Activated CD4-positive, alpha-beta memory T cell treated with anti-CD3 and anti-CD28 coated beads for 36 hours (primary cell): ENCODE measurements at regions of chr5 and their contacts with region 1.

Region 1: GRCh38 chr5:39283231-39283818 is 64.0 kb upstream of the FYB1 start:
- DNase-seq: peak; percentile 60
- H3K4me3 Mint-ChIP-seq: peak overlapping the region; percentile 4
- H3K27ac Mint-ChIP-seq: peak overlapping the region; percentile 68
- H3K4me1 Mint-ChIP-seq: peaks cover 31% of the 10 kb centered on the region
- H3K27me3 Mint-ChIP-seq: peaks cover 3% of the 10 kb centered on the region

Region 2: GRCh38 chr5:38871790-38872551 is 411.4 kb before region 1 on chr5:
- CTCF ChIA-PET with region 1: no interaction called
- POLR2A ChIA-PET with region 1: no interaction called
- intact Hi-C with region 1: no loop called
- DNase-seq: no peak
- H3K4me3 Mint-ChIP-seq: no peak overlapping the region
- H3K27ac Mint-ChIP-seq: no peak overlapping the region
- H3K4me1 Mint-ChIP-seq: no peaks in the 10 kb centered on the region
- H3K27me3 Mint-ChIP-seq: peaks cover 23% of the 10 kb centered on the region

Region 3: DNA sequence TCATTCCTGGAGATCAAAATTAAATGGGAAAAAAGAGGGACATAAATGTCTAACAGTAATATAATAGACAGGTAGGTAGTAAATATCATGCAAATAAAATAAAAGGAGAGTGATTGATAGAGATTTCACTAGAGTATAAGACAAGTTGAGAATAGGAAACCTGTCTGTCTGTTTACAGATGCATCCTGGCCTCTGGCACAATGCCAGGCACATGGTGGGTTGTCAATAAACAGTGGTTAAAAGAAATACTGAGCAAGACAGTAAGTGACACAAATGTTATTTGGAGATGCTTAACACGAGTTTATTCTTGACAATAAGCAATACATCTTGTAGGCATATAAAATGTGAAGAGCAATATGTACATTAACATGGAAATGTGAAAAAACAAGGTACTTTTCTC is 242.4 kb before region 1 on chr5:
- CTCF ChIA-PET with region 1: no interaction called
- POLR2A ChIA-PET with region 1: no interaction called
- intact Hi-C with region 1: no loop called
- DNase-seq: no peak
- H3K4me3 Mint-ChIP-seq: no peak overlapping the region
- H3K27ac Mint-ChIP-seq: no peak overlapping the region
- H3K4me1 Mint-ChIP-seq: peaks cover 26% of the 10 kb centered on the region
- H3K27me3 Mint-ChIP-seq: no peaks in the 10 kb centered on the region

Region 4: GRCh38 chr5:39074016-39074886 is 209.1 kb before region 1 on chr5 and contains the start of gene RICTOR:
- CTCF ChIA-PET with region 1: interaction called, 3 read pairs
- POLR2A ChIA-PET with region 1: no interaction called
- intact Hi-C with region 1: loop called (anchors 2 kb)
- DNase-seq: peak; percentile 95
- H3K4me3 Mint-ChIP-seq: peak within 1 kb of the TSS; percentile 97
- H3K27ac Mint-ChIP-seq: peak within 1 kb of the TSS; percentile 96
- H3K4me1 Mint-ChIP-seq: peaks cover 28% of the 10 kb centered on the region
- H3K27me3 Mint-ChIP-seq: peaks cover 18% of the 10 kb centered on the region
- total RNA-seq, gene RICTOR: 27.7 to 27.8 TPM

Region 5: DNA sequence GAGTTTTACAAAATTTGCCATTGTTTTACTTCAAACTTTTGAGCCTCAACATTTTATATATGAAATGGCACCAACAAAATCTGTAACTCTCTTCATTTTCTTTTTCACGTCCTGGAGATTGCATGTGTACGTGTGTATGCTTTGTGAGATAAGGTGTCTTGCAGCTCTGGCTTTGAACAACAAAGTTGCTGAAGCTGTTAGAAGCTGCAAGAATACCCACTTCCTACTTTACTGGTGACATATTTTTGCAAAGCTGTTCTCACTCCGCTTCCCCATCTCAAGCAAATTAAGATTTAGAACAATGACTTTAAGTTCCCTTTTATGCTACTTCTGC is 105.7 kb before region 1 on chr5:
- CTCF ChIA-PET with region 1: interaction called, 4 read pairs
- POLR2A ChIA-PET with region 1: no interaction called
- intact Hi-C with region 1: loop called (anchors 1 kb)
- DNase-seq: no peak
- H3K4me3 Mint-ChIP-seq: peak overlapping the region; percentile 63
- H3K27ac Mint-ChIP-seq: peak overlapping the region; percentile 88
- H3K4me1 Mint-ChIP-seq: peaks cover 97% of the 10 kb centered on the region
- H3K27me3 Mint-ChIP-seq: no peaks in the 10 kb centered on the region

Region 6: DNA sequence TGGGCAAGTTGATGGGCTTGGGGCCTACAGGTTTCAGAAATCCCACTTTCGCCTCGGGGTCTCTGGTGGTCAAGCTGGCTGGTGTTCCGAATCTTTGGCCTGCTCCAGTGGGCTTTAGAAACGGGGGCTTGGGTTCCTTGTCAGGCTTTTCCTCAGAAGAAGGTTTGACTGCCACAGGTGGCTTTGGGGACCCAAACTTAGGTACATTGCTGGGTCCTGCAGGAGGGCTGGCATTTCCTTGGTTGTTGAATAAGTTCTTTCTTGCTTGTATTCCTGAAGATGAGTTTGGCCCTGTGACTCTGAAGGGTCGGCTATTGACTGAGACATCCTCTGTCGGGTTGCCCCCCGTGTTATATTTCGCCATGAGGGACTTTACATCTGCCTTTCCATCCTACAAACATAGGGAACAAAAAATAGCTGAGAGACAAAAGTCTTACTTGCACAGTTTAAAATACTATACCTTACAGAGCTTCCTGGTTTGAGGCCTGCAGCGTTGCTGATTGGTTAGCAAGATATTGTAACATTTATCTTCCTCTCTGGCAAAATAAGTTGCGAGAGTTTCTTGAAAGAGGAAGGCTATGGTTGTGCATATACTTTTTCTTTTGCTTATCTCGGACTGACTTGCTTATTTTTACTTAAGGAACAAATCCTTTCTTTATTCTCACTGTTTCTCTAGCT is 80.6 kb before region 1 on chr5:
- CTCF ChIA-PET with region 1: interaction called, 22 read pairs
- POLR2A ChIA-PET with region 1: no interaction called
- intact Hi-C with region 1: no loop called
- DNase-seq: no peak
- H3K4me3 Mint-ChIP-seq: peak overlapping the region; percentile 88
- H3K27ac Mint-ChIP-seq: peak overlapping the region; percentile 95
- H3K4me1 Mint-ChIP-seq: peaks cover 39% of the 10 kb centered on the region
- H3K27me3 Mint-ChIP-seq: no peaks in the 10 kb centered on the region

Region 7: GRCh38 chr5:39231705-39232525 is 51.4 kb before region 1 on chr5:
- CTCF ChIA-PET with region 1: interaction called, 18 read pairs
- POLR2A ChIA-PET with region 1: interaction called, 3 read pairs
- intact Hi-C with region 1: no loop called
- DNase-seq: peak; percentile 75
- H3K4me3 Mint-ChIP-seq: peak overlapping the region; percentile 70
- H3K27ac Mint-ChIP-seq: peak overlapping the region; percentile 97
- H3K4me1 Mint-ChIP-seq: peaks cover 14% of the 10 kb centered on the region
- H3K27me3 Mint-ChIP-seq: no peaks in the 10 kb centered on the region